ENCODE measurements at regions of chr22 and their contacts with region 1.

Region 1: DNA sequence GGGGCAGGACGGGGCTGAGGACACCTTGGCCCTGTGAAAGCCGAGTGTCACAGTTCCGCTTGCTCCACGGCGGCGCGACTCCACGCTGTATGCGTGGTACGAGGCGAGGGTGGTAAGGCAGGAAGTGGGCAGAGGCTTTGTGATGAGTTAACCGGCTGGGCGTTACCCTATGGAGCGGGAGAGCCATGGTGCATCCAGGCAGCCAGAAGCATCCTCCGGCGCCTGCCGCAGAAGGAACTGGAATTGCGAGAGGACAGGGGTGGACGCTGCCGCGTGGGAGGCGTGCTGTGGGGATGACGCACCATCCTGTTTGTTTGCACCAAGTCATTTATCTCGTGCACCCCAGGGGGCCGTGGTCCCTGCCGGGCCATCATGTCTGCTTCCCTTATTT is 643.9 kb downstream of the BRD1 start:
- DNase-seq: no peak

Region 2: GRCh38 chr22:47281126-47282106 is 1902.4 kb before region 1 on chr22:
- intact Hi-C with region 1: loop called in 1 of 2 experiments (anchors 10 kb)
- DNase-seq: peak; percentile 56

Region 3: DNA sequence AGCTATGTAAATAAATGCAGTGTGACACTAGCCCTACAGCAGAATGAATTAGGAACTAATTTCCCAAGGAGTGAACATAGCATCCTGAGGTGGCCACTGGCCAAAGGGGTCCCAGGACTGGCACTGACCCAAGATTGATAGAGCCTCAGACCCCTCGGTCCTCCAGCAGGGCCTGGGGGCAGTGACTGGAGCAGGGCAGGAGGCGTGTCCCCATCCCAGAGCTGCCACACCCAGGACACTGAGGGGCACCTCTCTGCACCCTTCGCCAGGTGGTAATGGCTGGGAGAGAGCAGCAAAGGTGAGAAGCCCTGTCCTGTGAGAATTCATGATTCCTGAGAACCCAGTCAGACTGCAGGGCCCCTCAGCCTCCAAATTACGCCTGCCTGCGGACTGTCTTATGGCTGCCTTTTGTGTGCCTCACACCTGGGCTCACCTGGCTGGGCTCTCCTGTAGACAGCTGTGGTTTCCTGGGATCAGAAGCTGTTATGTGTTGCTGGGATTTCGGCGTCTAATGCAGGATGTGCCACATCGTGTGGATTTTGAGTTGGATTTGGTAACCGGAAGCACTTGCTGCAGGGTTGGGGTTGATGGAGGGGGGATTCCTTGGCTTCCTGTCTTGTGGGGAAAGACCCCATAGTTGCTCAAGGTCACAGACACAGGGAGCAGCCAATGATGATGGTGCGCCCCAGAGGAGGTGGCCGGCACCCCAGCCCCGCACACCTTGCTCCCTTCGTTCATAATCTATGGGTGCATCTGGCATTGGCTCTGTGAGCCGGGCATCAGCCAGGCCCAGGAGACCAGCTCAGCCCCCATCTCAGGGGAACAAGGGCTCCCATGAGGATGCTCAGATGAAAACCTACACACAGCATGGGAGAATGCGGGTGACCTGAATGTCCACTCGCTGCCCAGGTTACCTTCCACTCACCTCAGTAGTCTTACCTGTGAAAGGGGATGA is 60.9 kb after region 1 on chr22:
- intact Hi-C with region 1: no loop called
- DNase-seq: peak; percentile 58

Measured in posterior vena cava (tissue), 2 donors.